GM12878 (cell line): ENCODE measurements at regions of chr17 and their contacts with region 1.

Region 1: DNA sequence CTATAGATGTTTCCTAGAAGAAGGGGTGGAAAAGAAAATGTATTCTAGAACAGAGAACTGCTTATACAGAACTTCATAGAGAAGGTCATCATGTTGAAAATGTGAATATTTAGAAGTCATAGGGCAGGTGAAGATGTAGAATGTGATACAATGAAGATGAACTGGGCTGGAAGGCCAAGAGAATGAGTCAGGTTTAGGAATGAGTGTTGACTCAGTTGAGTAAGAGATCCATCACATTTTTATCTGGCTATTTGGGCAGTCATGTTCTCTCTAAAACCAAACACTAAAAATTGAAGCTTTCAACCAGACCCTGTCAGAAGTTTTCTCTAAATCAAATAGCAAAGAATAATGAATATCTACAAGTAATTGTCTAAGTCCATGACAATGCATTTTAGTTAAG is 660.5 kb downstream of the KCNJ2 start:
- DNase-seq: no peak
- ATAC-seq: no peak
- H3K4me3 ChIP-seq: no peak overlapping the region
- H3K27ac ChIP-seq: no peak overlapping the region
- H3K4me1 ChIP-seq: no peaks in the 10 kb centered on the region
- H3K27me3 ChIP-seq: no peaks in the 10 kb centered on the region
- CTCF ChIP-seq: no peak
- EP300 ChIP-seq: no peak
- POLR2A ChIP-seq: no peak
- RAD21 ChIP-seq: no peak

Region 2: DNA sequence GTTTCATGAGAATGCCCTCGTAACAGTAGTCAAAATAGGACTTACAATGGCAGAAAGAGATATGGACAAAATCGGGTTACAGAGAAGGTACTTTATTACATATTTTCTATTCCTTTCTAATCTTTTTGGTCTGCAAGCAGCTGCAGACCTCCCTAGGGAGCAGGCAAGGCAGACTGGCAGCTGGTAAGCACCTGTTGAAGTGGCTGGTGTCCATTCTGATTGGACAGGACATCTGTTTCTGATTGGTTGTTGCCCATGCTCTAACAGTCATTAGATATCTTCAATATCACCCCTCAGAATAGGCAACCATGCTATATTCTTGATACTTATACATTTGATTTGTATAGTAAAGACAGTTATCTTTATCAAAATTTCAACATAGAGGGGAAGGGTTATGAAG is 54.2 kb before region 1 on chr17:
- CTCF ChIA-PET with region 1: no interaction called
- POLR2A ChIA-PET with region 1: no interaction called
- RAD21 ChIA-PET with region 1: no interaction called
- SMC1A ChIA-PET with region 1: no interaction called
- in situ Hi-C with region 1: no loop called
- intact Hi-C with region 1: loop called (anchors 10 kb)
- DNase-seq: no peak
- ATAC-seq: peak; percentile 37; the same call in 1 of the 3 replicates
- H3K4me3 ChIP-seq: no peak overlapping the region
- H3K27ac ChIP-seq: no peak overlapping the region
- H3K4me1 ChIP-seq: no peaks in the 10 kb centered on the region
- H3K27me3 ChIP-seq: no peaks in the 10 kb centered on the region
- CTCF ChIP-seq: no peak
- EP300 ChIP-seq: no peak
- POLR2A ChIP-seq: no peak
- RAD21 ChIP-seq: no peak